Calu3 (cell line): ENCODE measurements at regions of chr7 and their contacts with region 1.

Region 1: GRCh38 chr7:42940985-42941847 is 9.0 kb downstream of the MRPL32 start:
- DNase-seq: peak; percentile 88
- H3K4me3 Mint-ChIP-seq: no peak overlapping the region
- H3K27ac Mint-ChIP-seq: no peak overlapping the region
- H3K4me1 Mint-ChIP-seq: no peaks in the 10 kb centered on the region
- H3K27me3 Mint-ChIP-seq: no peaks in the 10 kb centered on the region
- CTCF ChIP-seq: peak; percentile 91

Region 2: DNA sequence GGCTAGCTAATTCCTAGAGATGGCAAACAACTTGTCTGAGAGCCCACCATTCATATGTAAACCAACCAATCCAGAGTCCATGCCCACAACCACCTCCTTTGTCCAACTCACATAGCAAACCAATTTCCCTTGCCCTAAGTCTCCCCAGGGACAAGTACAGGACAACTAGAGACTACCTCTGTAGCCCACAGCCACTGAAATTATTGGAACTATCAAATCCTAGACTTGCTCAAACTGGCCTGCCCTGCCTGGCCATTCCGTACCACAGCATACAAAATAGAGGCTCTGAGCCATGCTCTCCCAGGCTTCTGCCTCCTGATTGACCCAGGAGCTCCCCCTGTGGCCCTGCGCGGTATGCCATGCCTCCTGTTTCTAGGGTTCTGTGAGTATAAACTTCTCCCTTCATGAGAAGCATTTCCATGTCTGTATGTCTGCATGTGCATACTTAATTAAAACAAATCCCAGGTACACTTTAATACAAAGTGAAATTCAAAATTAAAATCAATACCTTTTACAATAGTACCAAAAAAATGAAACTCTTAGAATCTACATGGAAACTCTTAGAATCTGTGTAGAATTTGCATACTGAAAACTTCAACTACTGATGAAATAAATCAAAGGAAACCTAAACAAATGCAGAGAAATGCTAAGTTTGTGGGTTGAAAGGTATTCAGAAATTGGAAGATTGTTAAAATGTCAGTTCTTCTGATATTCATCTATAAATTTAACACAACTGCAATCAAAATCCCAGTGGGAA is 167.2 kb after region 1 on chr7:
- CTCF ChIA-PET with region 1: no interaction called
- intact Hi-C with region 1: loop called (anchors 1 kb)
- DNase-seq: peak; percentile 91
- H3K4me3 Mint-ChIP-seq: no peak overlapping the region
- H3K27ac Mint-ChIP-seq: no peak overlapping the region
- H3K4me1 Mint-ChIP-seq: no peaks in the 10 kb centered on the region
- H3K27me3 Mint-ChIP-seq: peaks cover 68% of the 10 kb centered on the region
- CTCF ChIP-seq: peak; percentile 90

Region 3: DNA sequence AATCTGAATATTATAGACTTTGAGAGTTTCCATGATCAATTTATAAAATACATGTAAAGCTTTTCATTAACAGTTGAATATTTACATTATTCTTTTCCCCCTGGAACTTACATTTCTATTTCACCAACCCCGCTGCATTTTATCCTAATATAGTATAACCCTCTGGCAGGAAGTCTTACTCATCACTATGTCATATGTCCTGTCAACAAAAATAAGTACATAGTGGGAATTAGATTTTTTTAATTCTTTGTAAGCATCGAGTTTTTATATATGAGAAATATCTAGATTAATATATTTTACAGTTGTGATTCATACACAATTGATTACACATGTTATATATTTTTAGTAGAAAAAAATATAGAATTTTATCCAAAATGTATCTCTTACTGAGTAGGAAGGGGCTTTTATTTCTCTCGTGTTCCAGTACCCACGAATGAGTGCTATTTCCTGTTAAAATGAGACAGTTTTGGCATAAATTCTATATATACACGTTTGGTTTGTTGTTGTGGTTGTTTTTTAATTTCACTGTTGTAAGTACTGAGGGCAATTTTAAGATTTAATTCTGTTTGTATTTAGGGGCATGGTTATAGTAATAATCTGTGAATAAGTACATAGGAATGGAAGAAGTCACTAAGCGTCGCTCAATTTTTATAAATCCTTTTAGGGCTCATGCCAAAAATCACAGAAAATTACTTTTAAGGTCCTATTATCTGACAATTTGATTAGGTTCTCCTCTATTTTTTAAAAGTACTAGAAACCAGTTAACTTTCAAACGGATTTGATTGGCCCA is 258.4 kb after region 1 on chr7:
- CTCF ChIA-PET with region 1: no interaction called
- intact Hi-C with region 1: no loop called
- DNase-seq: no peak
- H3K4me3 Mint-ChIP-seq: no peak overlapping the region
- H3K27ac Mint-ChIP-seq: no peak overlapping the region
- H3K4me1 Mint-ChIP-seq: no peaks in the 10 kb centered on the region
- H3K27me3 Mint-ChIP-seq: peaks cover 13% of the 10 kb centered on the region
- CTCF ChIP-seq: no peak

Region 4: DNA sequence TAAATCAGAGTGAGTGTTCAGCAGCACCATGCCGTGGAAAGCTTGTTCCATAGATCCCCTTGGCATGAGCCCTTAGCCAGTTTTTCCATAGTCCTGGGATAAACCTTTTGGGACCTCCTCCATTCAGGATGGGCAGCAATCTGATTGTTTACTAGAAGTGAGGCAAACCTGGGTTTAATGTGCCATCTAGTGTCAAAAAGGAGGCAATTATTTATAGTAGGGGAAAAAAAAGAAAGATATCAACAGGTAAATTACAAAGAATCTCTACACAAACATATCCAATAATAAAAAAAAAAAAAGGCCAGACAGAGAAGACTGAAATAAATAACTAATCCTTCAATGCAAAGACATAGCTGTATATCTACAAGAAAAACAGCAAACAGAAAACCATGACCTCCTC is 412.7 kb after region 1 on chr7:
- CTCF ChIA-PET with region 1: no interaction called
- intact Hi-C with region 1: loop called (anchors 5 kb)
- DNase-seq: no peak
- H3K4me3 Mint-ChIP-seq: no peak overlapping the region
- H3K27ac Mint-ChIP-seq: no peak overlapping the region
- H3K4me1 Mint-ChIP-seq: no peaks in the 10 kb centered on the region
- H3K27me3 Mint-ChIP-seq: peaks cover 25% of the 10 kb centered on the region
- CTCF ChIP-seq: no peak

Region 5: GRCh38 chr7:43454936-43455518 is 513.8 kb after region 1 on chr7:
- CTCF ChIA-PET with region 1: interaction called, 3 read pairs
- intact Hi-C with region 1: loop called (anchors 2 kb)
- DNase-seq: peak; percentile 25
- H3K4me3 Mint-ChIP-seq: no peak overlapping the region
- H3K27ac Mint-ChIP-seq: no peak overlapping the region
- H3K4me1 Mint-ChIP-seq: peaks cover 10% of the 10 kb centered on the region
- H3K27me3 Mint-ChIP-seq: no peaks in the 10 kb centered on the region
- CTCF ChIP-seq: peak; percentile 66

Region 6: GRCh38 chr7:43721193-43721806 is 780.1 kb after region 1 on chr7:
- CTCF ChIA-PET with region 1: no interaction called
- intact Hi-C with region 1: loop called (anchors 1 kb)
- DNase-seq: peak; percentile 28
- H3K4me3 Mint-ChIP-seq: no peak overlapping the region
- H3K27ac Mint-ChIP-seq: no peak overlapping the region
- H3K4me1 Mint-ChIP-seq: peaks cover 18% of the 10 kb centered on the region
- H3K27me3 Mint-ChIP-seq: no peaks in the 10 kb centered on the region
- CTCF ChIP-seq: peak; percentile 67